ENCODE measurements at regions of chr1 and their contacts with region 1.

Region 1: DNA sequence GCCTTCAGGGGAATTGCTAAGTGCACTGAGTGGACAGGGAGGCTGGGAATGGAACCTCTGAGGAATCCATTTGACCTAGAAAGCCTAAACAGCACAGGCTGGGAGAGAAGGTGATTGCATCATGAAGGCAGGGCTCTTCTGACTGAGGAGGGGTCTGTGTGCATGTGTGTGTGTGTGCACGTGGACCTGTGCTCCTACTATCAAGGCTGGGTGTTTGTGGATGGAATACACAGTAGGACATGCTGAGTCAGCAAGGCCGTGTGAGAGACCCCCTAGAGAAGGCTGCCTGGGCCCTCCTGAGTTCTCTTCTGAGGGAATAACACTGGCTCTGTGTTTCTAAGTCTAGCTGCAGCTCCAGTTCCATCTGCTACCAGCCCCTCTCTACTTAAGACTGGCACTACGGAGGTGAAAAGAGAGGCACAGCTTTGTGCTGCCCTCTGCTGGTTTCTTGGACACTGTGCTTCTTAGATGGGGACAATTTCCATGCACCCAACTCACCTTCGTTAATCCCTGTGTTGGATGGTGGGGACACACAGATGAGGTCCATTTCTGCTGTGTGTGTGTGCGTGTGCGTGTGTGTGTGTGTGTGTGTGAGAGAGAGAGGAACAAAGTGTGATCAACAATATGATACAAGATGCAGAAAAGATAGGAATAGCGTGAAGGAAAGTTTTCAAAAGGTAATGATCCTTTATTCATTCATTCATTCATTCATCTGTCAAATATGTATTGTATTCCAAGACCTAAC is 6.2 kb upstream of the EFCAB14 start:
- DNase-seq: peak; percentile 85
- ATAC-seq: peak; percentile 98
- H3K4me3 ChIP-seq: no peak overlapping the region
- H3K27ac ChIP-seq: no peak overlapping the region
- H3K4me1 ChIP-seq: no peaks in the 10 kb centered on the region
- H3K27me3 ChIP-seq: peaks cover 17% of the 10 kb centered on the region
- CTCF ChIP-seq: peak; percentile 87
- POLR2A ChIP-seq: no peak
- RAD21 ChIP-seq: peak; percentile 86

Region 2: GRCh38 chr1:46442317-46443161 is 282.6 kb before region 1 on chr1:
- CTCF ChIA-PET with region 1: no interaction called
- POLR2A ChIA-PET with region 1: no interaction called
- dilution Hi-C with region 1: no loop called
- in situ Hi-C with region 1: no loop called
- intact Hi-C with region 1: loop called (anchors 2 kb)
- DNase-seq: peak; percentile 69
- ATAC-seq: peak; percentile 93
- H3K4me3 ChIP-seq: peak overlapping the region; percentile 20; the same call in 1 of the 2 replicates
- H3K27ac ChIP-seq: no peak overlapping the region
- H3K4me1 ChIP-seq: no peaks in the 10 kb centered on the region
- H3K27me3 ChIP-seq: peaks cover 42% of the 10 kb centered on the region
- CTCF ChIP-seq: peak; percentile 73
- POLR2A ChIP-seq: no peak
- RAD21 ChIP-seq: peak; percentile 30

Region 3: GRCh38 chr1:46477153-46477929 is 247.8 kb before region 1 on chr1:
- CTCF ChIA-PET with region 1: interaction called, 3 read pairs
- POLR2A ChIA-PET with region 1: no interaction called
- dilution Hi-C with region 1: no loop called
- in situ Hi-C with region 1: no loop called
- intact Hi-C with region 1: loop called (anchors 2 kb)
- DNase-seq: peak; percentile 55
- ATAC-seq: peak; percentile 98
- H3K4me3 ChIP-seq: no peak overlapping the region
- H3K27ac ChIP-seq: no peak overlapping the region
- H3K4me1 ChIP-seq: no peaks in the 10 kb centered on the region
- H3K27me3 ChIP-seq: peaks cover 73% of the 10 kb centered on the region
- CTCF ChIP-seq: peak; percentile 91
- POLR2A ChIP-seq: no peak
- RAD21 ChIP-seq: peak; percentile 85

Region 4: DNA sequence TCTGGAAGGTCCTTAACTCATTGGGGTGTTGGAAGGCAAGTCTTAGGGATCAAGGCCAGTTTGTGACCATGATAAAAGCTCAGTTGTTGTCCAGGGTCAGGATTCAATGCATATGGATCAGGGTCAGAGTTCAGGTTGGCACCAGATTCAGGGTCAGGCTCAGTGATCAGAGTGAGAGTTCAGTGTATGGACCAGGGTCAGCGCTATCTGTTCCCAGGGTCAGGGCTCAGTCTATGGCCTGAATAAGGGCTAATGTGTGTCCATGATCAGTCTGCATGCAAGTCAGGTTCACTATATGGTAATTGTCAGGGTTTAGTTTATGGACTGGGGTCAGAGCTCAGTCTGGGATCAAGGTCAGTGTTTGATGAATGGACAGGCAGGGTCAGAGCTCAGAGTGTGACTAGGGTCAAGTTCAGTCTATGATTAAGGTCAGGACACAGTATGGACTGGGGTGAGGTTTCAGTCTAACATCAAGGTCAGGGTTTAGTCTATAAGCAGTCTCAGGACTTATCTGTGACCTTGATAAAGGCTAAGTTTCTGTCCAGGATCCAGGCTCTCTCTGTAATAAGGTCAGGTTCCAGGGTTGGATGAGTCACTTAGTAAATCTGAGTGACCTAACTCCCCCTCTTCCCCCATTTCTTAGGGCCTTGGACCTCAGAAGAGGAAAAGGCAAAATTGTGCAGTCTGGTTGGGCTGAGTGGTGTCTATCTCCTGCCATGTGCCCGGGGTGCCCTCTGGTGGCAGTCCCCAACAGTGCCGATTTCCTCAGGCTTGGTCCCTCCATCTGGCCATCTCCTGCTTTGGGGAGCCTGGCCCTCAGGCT is 197.5 kb before region 1 on chr1:
- CTCF ChIA-PET with region 1: no interaction called
- POLR2A ChIA-PET with region 1: no interaction called
- dilution Hi-C with region 1: no loop called
- in situ Hi-C with region 1: no loop called
- intact Hi-C with region 1: loop called (anchors 1 kb)
- DNase-seq: peak; percentile 66
- ATAC-seq: peak; percentile 90
- H3K4me3 ChIP-seq: no peak overlapping the region
- H3K27ac ChIP-seq: no peak overlapping the region
- H3K4me1 ChIP-seq: peaks cover 3% of the 10 kb centered on the region; the same call in 1 of the 2 replicates
- H3K27me3 ChIP-seq: peaks cover 57% of the 10 kb centered on the region
- CTCF ChIP-seq: peak; percentile 98
- POLR2A ChIP-seq: peak; percentile 55; the same call in 1 of the 2 replicates
- RAD21 ChIP-seq: peak; percentile 99

Region 5: DNA sequence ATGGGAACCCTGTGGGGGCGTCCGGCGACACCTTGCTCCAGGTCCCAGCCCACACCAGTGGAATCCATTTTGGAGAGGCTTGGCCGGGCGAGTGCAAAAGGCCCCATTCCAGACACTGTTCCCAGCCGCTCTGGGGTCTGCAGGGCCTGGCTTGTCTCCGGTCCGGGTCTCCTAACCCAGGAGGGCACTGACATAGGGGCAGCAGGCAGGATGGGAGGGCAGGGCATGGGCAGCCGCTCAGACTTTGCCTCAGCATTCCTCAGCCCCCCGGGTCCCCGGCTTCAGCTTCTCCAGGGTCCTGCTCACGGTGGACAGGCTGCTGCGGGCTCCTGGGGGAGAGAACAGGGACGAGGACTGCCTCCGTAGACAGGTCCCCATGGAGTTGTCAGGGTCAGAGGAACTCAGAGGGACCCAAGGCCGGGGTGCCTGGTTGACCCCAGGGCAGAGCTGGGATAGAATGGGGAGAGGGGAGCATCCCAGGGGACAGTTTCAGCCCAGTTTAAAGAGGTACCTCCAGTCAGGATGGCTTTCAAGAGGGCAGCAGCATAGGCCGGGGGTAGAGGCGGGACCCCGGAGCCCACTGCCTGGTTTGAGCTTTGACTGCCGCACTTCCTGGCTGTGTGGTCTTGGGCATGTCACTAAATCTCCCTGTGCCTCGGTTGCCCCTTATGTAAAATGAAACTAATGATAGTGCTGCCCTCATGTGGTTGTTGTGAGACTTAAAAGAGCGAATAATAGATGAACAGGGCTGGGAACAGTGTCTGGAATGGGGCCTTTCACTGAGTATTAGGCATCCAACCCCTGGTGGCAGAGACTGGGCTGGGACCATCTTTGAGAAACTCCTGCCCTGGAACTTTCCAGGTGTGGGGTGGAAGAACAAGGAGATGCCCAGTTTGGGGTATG is 177.4 kb before region 1 on chr1:
- CTCF ChIA-PET with region 1: interaction called, 3 read pairs
- POLR2A ChIA-PET with region 1: no interaction called
- dilution Hi-C with region 1: no loop called
- in situ Hi-C with region 1: no loop called
- intact Hi-C with region 1: loop called (anchors 5 kb)
- DNase-seq: peak; percentile 62
- ATAC-seq: peak; percentile 83
- H3K4me3 ChIP-seq: no peak overlapping the region
- H3K27ac ChIP-seq: no peak overlapping the region
- H3K4me1 ChIP-seq: no peaks in the 10 kb centered on the region
- H3K27me3 ChIP-seq: peaks cover 78% of the 10 kb centered on the region
- CTCF ChIP-seq: peak; percentile 58
- POLR2A ChIP-seq: no peak
- RAD21 ChIP-seq: peak; percentile 54

Region 6: GRCh38 chr1:46622344-46622743 is 102.8 kb before region 1 on chr1:
- CTCF ChIA-PET with region 1: interaction called, 12 read pairs
- POLR2A ChIA-PET with region 1: no interaction called
- dilution Hi-C with region 1: no loop called
- in situ Hi-C with region 1: no loop called
- intact Hi-C with region 1: loop called (anchors 1 kb)
- DNase-seq: peak; percentile 28
- ATAC-seq: peak; percentile 84
- H3K4me3 ChIP-seq: no peak overlapping the region
- H3K27ac ChIP-seq: no peak overlapping the region
- H3K4me1 ChIP-seq: no peaks in the 10 kb centered on the region; the same call in 1 of the 2 replicates
- H3K27me3 ChIP-seq: no peaks in the 10 kb centered on the region
- CTCF ChIP-seq: peak; percentile 52
- POLR2A ChIP-seq: no peak
- RAD21 ChIP-seq: peak; percentile 53

Region 7: GRCh38 chr1:47948126-47948525 is 1223.0 kb after region 1 on chr1:
- CTCF ChIA-PET with region 1: no interaction called
- POLR2A ChIA-PET with region 1: no interaction called
- dilution Hi-C with region 1: no loop called
- in situ Hi-C with region 1: no loop called
- intact Hi-C with region 1: no loop called
- DNase-seq: no peak
- ATAC-seq: no peak
- H3K4me3 ChIP-seq: no peak overlapping the region
- H3K27ac ChIP-seq: no peak overlapping the region
- H3K4me1 ChIP-seq: no peaks in the 10 kb centered on the region
- H3K27me3 ChIP-seq: no peaks in the 10 kb centered on the region
- CTCF ChIP-seq: no peak
- POLR2A ChIP-seq: no peak
- RAD21 ChIP-seq: no peak